ENCODE measurements at regions of chr12 and their contacts with region 1.

Region 1: GRCh38 chr12:91811481-91812287 is 334.0 kb downstream of the BTG1 start:
- DNase-seq: peak; percentile 64 to 73 (median 67)
- H3K4me3 ChIP-seq: no peak overlapping the region
- H3K4me3 Mint-ChIP-seq: peak overlapping the region in 5 of 8 donors; percentile 2 to 57 (median 44)
- H3K27ac ChIP-seq: no peak overlapping the region
- H3K27ac Mint-ChIP-seq: peak overlapping the region; percentile 7 to 92 (median 84)
- H3K4me1 ChIP-seq: peaks cover 8% of the 10 kb centered on the region
- H3K4me1 Mint-ChIP-seq: peaks cover 4 to 13% (median 12%) of the 10 kb centered on the region in 4 donors
- H3K27me3 ChIP-seq: no peaks in the 10 kb centered on the region
- H3K27me3 Mint-ChIP-seq: no peaks in the 10 kb centered on the region

Region 2: GRCh38 chr12:91801048-91801447 is 10.6 kb before region 1 on chr12:
- CTCF ChIA-PET with region 1: interaction called, 22 read pairs
- POLR2A ChIA-PET with region 1: no interaction called
- intact Hi-C with region 1: no loop called
- DNase-seq: no peak
- H3K4me3 ChIP-seq: no peak overlapping the region
- H3K4me3 Mint-ChIP-seq: no peak overlapping the region
- H3K27ac ChIP-seq: no peak overlapping the region
- H3K27ac Mint-ChIP-seq: no peak overlapping the region
- H3K4me1 ChIP-seq: no peaks in the 10 kb centered on the region
- H3K4me1 Mint-ChIP-seq: no peaks in the 10 kb centered on the region
- H3K27me3 ChIP-seq: no peaks in the 10 kb centered on the region
- H3K27me3 Mint-ChIP-seq: no peaks in the 10 kb centered on the region

Region 3: DNA sequence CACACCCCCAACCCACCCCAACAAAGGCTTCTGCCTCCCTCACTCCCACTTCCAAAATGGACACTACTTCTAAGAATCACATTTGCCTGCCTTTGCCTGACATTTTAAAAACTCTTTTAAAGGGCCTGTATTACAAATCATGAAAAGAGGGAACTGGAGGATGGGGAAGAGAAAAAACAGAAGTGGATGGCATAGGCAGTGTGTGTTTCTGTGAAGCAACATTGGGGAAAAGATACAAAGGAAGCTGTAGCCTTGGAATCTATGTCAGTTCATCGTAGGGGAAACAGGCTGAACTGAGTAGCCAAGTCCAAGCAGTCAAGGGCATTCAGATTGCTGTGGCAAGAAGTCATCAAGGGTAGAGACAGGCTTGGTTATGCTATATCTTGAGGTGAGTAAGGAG is 60.1 kb after region 1 on chr12:
- CTCF ChIA-PET with region 1: interaction called, 45 read pairs
- POLR2A ChIA-PET with region 1: interaction called, 44 read pairs
- intact Hi-C with region 1: no loop called
- DNase-seq: no peak
- H3K4me3 ChIP-seq: no peak overlapping the region
- H3K4me3 Mint-ChIP-seq: peak overlapping the region; percentile 1 to 81 (median 42)
- H3K27ac ChIP-seq: peak overlapping the region; percentile 56
- H3K27ac Mint-ChIP-seq: peak overlapping the region; percentile 83 to 99 (median 94)
- H3K4me1 ChIP-seq: peaks cover 64% of the 10 kb centered on the region
- H3K4me1 Mint-ChIP-seq: peaks cover 45 to 74% (median 57%) of the 10 kb centered on the region in 4 donors
- H3K27me3 ChIP-seq: no peaks in the 10 kb centered on the region
- H3K27me3 Mint-ChIP-seq: no peaks in the 10 kb centered on the region

Region 4: DNA sequence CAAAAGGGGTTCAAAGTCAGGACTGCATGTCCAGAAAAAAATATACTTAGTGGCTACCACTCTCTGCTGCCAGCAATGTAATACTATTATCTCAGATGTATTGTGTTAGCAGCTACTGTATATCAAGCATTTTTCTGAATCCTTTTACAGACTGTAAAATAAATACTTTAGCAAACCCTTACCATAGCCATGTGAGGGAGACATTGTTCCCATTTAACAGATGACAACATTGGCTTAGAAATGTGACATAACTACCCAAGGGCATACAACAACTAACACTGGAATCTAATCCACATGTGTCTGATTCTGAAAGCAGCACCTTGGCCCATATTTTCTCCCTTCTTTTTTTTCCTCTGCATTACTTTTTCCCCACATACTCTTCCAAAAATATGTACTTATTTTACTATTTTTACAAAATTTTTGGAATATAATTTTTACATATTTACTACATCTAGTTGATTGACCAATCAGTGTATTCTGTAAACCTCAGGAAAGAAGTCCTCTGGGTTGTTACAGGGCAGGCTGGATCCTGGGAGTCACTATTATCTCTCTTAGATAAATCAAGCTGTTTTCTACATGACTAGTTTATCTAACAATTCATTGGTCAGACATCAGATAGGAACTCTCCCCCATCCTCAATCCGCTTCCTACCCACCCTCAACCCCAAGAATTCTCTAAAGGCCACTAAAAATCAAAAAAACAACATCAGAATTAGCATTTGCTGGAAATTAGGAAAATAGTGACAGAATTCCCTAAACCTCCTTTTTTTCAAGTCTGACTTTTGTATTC is 179.9 kb after region 1 on chr12:
- CTCF ChIA-PET with region 1: interaction called, 32 read pairs
- POLR2A ChIA-PET with region 1: interaction called, 7 read pairs
- intact Hi-C with region 1: loop called (anchors 5 kb)
- DNase-seq: peak in 4 of 5 donors; percentile 51 to 67 (median 54)
- H3K4me3 ChIP-seq: no peak overlapping the region
- H3K4me3 Mint-ChIP-seq: no peak overlapping the region
- H3K27ac ChIP-seq: no peak overlapping the region
- H3K27ac Mint-ChIP-seq: peak overlapping the region in 5 of 7 donors; percentile 22 to 85 (median 70)
- H3K4me1 ChIP-seq: peaks cover 27% of the 10 kb centered on the region
- H3K4me1 Mint-ChIP-seq: peaks cover 18 to 37% (median 28%) of the 10 kb centered on the region in 4 donors
- H3K27me3 ChIP-seq: no peaks in the 10 kb centered on the region
- H3K27me3 Mint-ChIP-seq: no peaks in the 10 kb centered on the region

Region 5: DNA sequence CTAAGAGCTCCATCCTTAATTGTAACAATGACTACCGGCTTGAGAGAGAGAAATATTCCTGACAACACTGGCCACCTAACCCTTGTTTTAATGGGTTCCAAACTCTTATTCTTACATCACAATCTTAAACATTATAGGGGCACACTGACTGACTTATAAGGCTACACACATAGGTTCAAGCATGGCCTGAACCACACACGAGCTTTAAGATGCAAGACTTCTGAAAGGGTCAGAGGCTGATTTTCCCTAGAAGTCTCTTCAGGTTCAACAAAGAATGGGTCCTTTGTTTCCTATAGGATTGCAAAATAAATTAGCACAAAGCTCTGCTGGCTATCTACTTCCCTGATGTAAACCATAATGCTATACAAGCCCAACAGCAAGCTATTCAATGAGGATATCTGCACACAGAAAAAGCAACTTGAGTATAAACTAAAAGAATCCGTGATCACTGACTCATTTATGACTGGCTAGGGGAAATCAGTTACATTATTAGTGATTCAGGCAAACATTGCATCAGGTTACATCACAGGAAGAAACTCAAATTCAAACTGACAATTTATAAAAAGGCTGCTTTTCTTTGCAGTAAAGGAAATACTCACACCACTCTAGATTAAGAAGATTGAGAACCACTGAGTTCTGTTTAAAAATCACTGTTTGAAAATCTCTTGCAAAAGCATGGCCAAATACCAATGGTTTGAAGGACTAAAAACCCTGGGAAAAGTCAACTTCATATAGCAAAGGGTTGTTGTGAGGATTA is 325.5 kb after region 1 on chr12:
- CTCF ChIA-PET with region 1: interaction called, 22 read pairs
- POLR2A ChIA-PET with region 1: interaction called, 99 read pairs
- intact Hi-C with region 1: loop called (anchors 1 kb)
- DNase-seq: no peak
- H3K4me3 ChIP-seq: peak overlapping the region; percentile 83 to 89
- H3K4me3 Mint-ChIP-seq: peak overlapping the region; percentile 87 to 100 (median 100)
- H3K27ac ChIP-seq: peak overlapping the region; percentile 86
- H3K27ac Mint-ChIP-seq: peak overlapping the region; percentile 83 to 100 (median 99)
- H3K4me1 ChIP-seq: peaks cover 52% of the 10 kb centered on the region
- H3K4me1 Mint-ChIP-seq: peaks cover 43 to 59% (median 49%) of the 10 kb centered on the region in 4 donors
- H3K27me3 ChIP-seq: no peaks in the 10 kb centered on the region
- H3K27me3 Mint-ChIP-seq: no peaks in the 10 kb centered on the region